Heart left ventricle (tissue), 16 donors: ENCODE measurements at regions of chr21 and their contacts with region 1.

Region 1: GRCh38 chr21:26776310-26777021 is 68.7 kb downstream of the ADAMTS1 start:
- DNase-seq: no peak
- ATAC-seq: no peak
- H3K4me3 ChIP-seq: no peak overlapping the region
- H3K27ac ChIP-seq: no peak overlapping the region
- H3K4me1 ChIP-seq: peaks cover 0 to 4% (median 0%) of the 10 kb centered on the region in 12 donors
- H3K27me3 ChIP-seq: no peaks in the 10 kb centered on the region
- CTCF ChIP-seq: no peak
- POLR2A ChIP-seq: no peak

Region 2: DNA sequence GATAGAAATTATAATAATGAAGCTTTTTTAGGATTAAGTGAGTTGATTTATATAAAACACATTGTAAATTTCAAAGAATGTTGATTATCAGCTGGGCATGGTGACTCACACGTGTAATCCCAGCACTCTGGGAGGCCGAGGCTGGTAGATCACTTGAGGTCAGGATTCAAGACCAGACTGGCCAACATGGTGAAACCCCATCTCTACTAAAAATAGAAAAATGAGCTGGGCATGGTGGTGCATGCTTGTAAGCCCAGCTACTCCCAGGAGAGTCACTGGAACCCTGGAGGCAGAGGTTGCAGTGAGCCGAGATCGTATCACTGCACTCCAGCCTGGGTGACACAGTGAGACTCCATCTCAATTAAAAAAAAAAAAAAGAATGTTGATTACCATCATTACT is 50.3 kb after region 1 on chr21:
- intact Hi-C with region 1: loop called in 3 of 10 experiments (anchors 5 kb)
- DNase-seq: peak in 1 of 5 donors; percentile 14
- ATAC-seq: no peak
- H3K4me3 ChIP-seq: no peak overlapping the region
- H3K27ac ChIP-seq: no peak overlapping the region
- H3K4me1 ChIP-seq: no peaks in the 10 kb centered on the region
- H3K27me3 ChIP-seq: no peaks in the 10 kb centered on the region
- CTCF ChIP-seq: no peak
- POLR2A ChIP-seq: no peak

Region 3: GRCh38 chr21:26834181-26834945 is 57.9 kb after region 1 on chr21:
- intact Hi-C with region 1: loop called in 3 of 10 experiments (anchors 5 kb)
- DNase-seq: no peak
- ATAC-seq: no peak
- H3K4me3 ChIP-seq: no peak overlapping the region
- H3K27ac ChIP-seq: peak overlapping the region in 1 of 12 donors; percentile 5
- H3K4me1 ChIP-seq: peaks cover 0 to 28% (median 23%) of the 10 kb centered on the region in 12 donors
- H3K27me3 ChIP-seq: no peaks in the 10 kb centered on the region
- CTCF ChIP-seq: peak in 5 of 12 donors; percentile 8 to 34 (median 27)
- POLR2A ChIP-seq: no peak

Region 4: DNA sequence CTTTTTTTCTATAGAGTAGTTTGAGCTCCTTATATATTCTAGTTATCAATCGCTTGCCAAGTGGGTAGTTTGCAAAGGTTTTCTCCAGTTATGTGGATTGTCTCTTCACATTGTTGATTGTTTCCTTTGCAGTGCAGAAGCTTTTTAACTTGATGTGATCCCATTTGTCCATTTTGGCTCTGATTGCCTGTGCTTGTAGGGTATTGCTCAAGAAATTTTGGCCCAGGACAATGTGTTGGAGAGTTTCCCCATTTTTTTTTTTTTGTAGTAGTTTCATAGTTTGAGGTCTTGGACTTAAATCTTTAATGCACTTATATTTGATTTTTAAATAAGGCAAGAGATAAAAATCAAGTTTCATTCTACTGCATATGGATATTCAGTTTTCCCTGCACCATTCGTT is 965.3 kb after region 1 on chr21:
- intact Hi-C with region 1: no loop called
- DNase-seq: no peak
- ATAC-seq: no peak
- H3K4me3 ChIP-seq: no peak overlapping the region
- H3K27ac ChIP-seq: no peak overlapping the region
- H3K4me1 ChIP-seq: peaks cover 0 to 3% (median 0%) of the 10 kb centered on the region in 12 donors
- H3K27me3 ChIP-seq: no peaks in the 10 kb centered on the region
- CTCF ChIP-seq: no peak
- POLR2A ChIP-seq: no peak